ENCODE measurements at regions of chr16 and their contacts with region 1.

Region 1: DNA sequence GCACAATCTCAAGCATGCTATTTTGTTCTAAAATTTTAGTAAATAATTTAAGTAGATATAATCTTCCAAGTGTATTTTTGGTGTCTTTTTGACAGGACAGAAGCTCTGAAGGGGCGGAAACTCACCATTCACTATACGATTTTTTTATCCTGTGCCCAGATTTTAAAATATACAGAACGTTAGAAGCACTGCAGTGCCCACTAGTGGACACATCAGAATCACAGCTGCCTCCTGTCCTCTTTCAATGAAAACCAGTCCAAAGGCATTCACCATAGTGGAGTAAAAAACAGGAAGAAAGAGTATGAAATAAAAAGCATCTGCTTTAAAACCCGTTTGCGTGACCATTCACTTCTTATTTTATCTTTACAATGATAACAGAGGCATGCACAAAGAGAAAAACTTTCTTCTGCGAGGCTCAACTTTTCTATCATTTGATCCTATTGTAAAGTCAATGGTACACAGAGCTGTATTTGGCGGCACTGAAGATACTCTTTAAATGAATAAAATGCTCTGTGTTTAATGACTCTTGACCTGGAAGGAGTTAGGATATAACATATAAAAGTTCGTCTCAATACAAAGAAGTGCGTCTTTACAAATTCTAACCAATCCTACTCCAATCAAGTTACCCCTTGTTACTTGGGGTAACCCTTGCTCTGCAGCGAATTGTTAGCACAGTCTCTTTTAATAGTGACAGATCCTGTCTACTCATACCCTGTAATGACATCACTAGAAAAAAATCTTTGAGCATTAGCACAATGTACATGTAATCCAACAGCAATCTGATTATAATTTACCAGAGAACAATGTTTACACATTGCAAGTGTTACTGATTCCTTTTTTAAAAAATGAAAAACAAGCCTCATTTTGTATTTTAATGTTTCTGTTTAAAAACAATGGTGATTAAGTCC is 339.8 kb upstream of the PSMD7 start:
- DNase-seq: no peak

Region 2: DNA sequence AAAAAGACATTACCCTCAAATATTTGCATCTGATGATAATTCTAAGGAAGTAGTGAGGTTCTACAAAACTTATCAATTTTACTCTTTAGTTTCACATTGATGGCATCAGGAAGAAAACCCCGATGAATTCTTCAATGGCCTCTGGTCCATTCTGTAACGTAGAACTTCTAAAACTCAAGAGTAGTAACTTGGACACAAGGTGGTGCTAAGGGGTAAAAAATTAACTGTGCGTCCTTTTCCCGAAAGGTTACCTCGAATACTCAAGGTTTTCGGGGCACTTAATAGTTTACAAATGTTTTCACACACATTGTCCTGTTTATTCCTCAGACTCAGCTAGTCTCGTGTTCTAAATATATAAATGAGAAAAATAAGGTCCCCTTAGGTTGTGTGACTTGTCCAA is 391.6 kb before region 1 on chr16:
- intact Hi-C with region 1: loop called (anchors 10 kb)
- DNase-seq: no peak

Region 3: GRCh38 chr16:73794994-73795393 is 161.8 kb before region 1 on chr16:
- intact Hi-C with region 1: loop called (anchors 10 kb)
- DNase-seq: no peak

Region 4: GRCh38 chr16:74029115-74029792 is 72.4 kb after region 1 on chr16:
- intact Hi-C with region 1: no loop called
- DNase-seq: no peak

Region 5: GRCh38 chr16:74111456-74111982 is 154.7 kb after region 1 on chr16:
- intact Hi-C with region 1: no loop called
- DNase-seq: no peak